OCI-LY7 (cell line): ENCODE measurements at regions of chr11 and their contacts with region 1.

Region 1: DNA sequence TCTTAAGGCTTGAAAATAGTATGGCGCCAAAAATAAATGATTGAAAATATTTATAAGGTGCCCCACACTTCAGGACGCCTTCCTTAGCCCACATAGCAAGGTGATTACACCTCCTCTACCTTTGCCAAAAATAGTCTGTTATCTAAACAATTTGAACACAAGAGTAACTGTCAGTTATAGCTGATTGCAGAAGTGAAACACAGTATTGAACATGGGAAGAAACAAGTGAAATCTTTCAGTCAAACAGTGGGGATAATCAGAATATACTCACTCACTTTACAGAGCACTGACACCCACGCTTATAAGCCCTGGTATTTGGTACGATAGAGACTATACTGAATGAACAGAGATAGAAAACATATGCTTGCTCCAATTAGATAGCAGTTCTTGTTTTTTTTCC is 203.1 kb downstream of the RAB38 start:
- DNase-seq: peak; percentile 46
- H3K4me3 ChIP-seq: peak overlapping the region; percentile 20
- H3K27ac ChIP-seq: peak overlapping the region; percentile 51
- H3K4me1 ChIP-seq: peaks cover 24% of the 10 kb centered on the region
- CTCF ChIP-seq: no peak

Region 2: DNA sequence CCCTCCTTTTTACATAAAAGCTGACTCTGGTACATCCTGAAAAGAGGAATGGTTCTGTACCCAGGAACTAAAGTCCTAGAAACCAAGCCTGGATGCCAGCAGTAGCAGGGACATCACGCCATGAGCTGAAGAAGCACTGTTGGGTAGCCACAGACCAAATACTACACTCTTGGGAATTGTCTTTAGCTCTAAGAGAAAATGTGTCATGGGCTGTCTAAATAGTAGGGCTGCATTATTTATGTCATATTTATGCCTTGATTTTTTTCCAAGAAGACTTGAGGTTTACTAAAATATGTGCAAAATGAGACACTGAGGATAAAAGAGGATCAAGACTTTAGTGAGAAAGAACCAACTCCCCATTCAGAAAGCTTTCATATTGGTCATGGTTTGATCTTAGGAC is 10.5 kb before region 1 on chr11:
- CTCF ChIA-PET with region 1: no interaction called
- POLR2A ChIA-PET with region 1: interaction called, 13 read pairs
- intact Hi-C with region 1: no loop called
- DNase-seq: no peak
- H3K4me3 ChIP-seq: no peak overlapping the region
- H3K27ac ChIP-seq: no peak overlapping the region
- H3K4me1 ChIP-seq: no peaks in the 10 kb centered on the region
- CTCF ChIP-seq: no peak